ENCODE measurements at regions of chr15 and their contacts with region 1.

Region 1: DNA sequence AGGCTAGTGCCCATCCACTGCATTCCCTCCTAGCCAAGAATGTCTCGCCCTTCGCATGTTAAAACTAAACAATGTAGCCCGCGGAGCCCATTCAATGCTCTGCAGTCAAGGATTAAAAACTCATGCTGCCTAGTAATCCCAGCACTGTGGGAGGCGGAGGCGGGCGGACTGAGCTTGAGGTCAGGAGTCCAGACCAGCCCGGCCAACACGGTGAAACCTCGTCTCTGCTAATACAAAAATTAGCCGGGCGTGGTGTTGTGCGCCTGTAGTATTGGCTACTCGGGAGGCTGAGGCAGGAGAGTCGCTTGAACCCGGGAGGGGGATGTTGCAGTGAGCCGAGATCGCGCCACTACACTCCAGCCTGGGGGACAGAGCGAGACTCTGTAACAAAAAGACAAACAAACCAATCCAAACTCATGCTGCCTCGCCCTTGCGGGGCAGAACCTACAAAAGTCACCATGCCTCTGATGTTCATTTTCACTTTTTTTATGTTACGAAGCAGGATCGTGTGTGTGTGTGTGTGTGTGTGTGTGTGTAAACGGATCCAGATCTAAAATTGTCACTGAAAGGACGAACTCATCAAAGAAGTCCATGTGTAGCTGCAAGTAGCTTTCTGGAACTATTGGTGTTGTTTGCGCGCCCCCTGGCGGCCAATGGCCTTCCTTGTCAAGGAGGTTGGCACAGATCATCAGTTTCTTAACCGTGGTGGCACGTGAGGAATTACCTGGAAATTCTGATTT is 54.8 kb upstream of the SPESP1 start:
- DNase-seq: peak; percentile 76 to 97 (median 89)
- ATAC-seq: peak; percentile 81
- H3K4me3 ChIP-seq: no peak overlapping the region
- H3K4me3 Mint-ChIP-seq: peak overlapping the region; percentile 20
- H3K27ac ChIP-seq: no peak overlapping the region
- H3K27ac Mint-ChIP-seq: no peak overlapping the region
- H3K4me1 ChIP-seq: peaks cover 4% of the 10 kb centered on the region
- H3K4me1 Mint-ChIP-seq: peaks cover 4% of the 10 kb centered on the region
- H3K27me3 ChIP-seq: peaks cover 0 to 14% of the 10 kb centered on the region in 2 experiments
- H3K27me3 Mint-ChIP-seq: peaks cover 20% of the 10 kb centered on the region
- CTCF ChIP-seq: peak; percentile 80

Region 2: DNA sequence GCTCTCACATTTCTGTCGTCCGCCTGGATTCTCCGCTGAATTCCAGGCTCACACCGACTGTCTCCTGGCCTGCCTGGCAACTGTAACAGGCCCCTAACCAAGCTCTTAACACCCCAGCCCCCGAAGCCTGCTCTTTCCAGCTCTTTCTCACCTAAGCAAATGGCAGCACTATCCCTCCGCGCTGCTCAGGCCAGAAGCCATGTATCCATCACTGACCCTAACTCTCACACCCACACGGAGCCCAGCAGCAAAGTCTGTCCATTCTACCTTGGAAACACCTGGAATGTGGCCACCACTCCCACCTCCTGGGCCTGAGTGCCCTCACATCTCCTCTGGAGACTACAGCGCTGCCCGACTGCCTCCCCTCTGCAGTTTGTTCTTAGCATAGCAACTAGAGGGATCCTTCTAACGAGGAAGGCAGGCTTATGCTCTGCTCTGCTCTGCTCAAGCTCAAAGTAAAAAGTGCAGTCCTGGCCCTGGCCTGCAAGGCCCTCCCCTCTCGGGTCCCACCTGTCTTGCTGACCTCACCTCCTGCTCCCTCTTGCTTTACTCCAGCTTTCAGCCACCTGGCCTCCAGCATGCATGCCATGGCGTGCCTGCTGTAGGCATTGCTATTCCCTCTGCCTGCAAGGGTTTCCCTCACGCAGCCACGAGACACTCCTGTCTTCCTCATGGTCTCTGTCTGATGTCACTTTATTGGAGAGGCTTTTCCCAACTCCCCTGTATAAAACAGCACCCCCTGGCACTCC is 570.8 kb before region 1 on chr15:
- CTCF ChIA-PET with region 1: no interaction called
- POLR2A ChIA-PET with region 1: no interaction called
- intact Hi-C with region 1: loop called in 1 of 2 experiments (anchors 2 kb)
- DNase-seq: peak in 1 of 9 experiments; percentile 6
- ATAC-seq: no peak
- H3K4me3 ChIP-seq: no peak overlapping the region
- H3K4me3 Mint-ChIP-seq: no peak overlapping the region
- H3K27ac ChIP-seq: no peak overlapping the region
- H3K27ac Mint-ChIP-seq: no peak overlapping the region
- H3K4me1 ChIP-seq: peaks cover 14% of the 10 kb centered on the region
- H3K4me1 Mint-ChIP-seq: peaks cover 21% of the 10 kb centered on the region
- H3K27me3 ChIP-seq: peaks cover 0 to 5% of the 10 kb centered on the region in 2 experiments
- H3K27me3 Mint-ChIP-seq: peaks cover 4% of the 10 kb centered on the region
- CTCF ChIP-seq: no peak

Region 3: DNA sequence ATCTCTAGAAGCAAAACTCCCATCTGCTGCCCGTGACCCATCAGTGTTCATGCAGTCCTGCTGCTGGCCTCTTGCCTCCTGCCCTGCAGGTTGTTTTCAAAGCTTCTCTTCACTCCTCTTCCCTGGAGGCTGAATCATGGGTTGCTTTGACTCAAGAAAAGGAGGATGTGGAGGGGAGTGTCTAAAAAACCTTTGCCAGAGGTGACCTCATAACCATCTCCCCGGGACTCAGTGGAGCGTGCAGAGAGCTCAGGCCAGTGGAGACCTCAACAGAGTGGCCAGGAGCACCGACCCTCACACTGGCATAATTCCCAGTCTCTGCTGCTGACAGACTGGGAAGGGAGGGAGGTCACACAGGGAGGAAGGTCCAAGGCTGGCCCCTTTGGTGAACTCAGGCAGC is 382.7 kb before region 1 on chr15:
- CTCF ChIA-PET with region 1: no interaction called
- POLR2A ChIA-PET with region 1: no interaction called
- intact Hi-C with region 1: no loop called
- DNase-seq: no peak
- ATAC-seq: no peak
- H3K4me3 ChIP-seq: no peak overlapping the region
- H3K4me3 Mint-ChIP-seq: no peak overlapping the region
- H3K27ac ChIP-seq: no peak overlapping the region
- H3K27ac Mint-ChIP-seq: no peak overlapping the region
- H3K4me1 ChIP-seq: no peaks in the 10 kb centered on the region
- H3K4me1 Mint-ChIP-seq: no peaks in the 10 kb centered on the region
- H3K27me3 ChIP-seq: no peaks in the 10 kb centered on the region
- H3K27me3 Mint-ChIP-seq: peaks cover 21% of the 10 kb centered on the region
- CTCF ChIP-seq: no peak

Region 4: GRCh38 chr15:68559345-68560310 is 315.9 kb before region 1 on chr15:
- CTCF ChIA-PET with region 1: interaction called, 51 read pairs
- POLR2A ChIA-PET with region 1: no interaction called
- intact Hi-C with region 1: loop called (anchors 1 to 2 kb)
- DNase-seq: peak; percentile 50 to 84 (median 70)
- ATAC-seq: peak; percentile 95
- H3K4me3 ChIP-seq: peak overlapping the region; percentile 30 to 66
- H3K4me3 Mint-ChIP-seq: peak overlapping the region; percentile 75
- H3K27ac ChIP-seq: no peak overlapping the region
- H3K27ac Mint-ChIP-seq: no peak overlapping the region
- H3K4me1 ChIP-seq: peaks cover 8% of the 10 kb centered on the region
- H3K4me1 Mint-ChIP-seq: peaks cover 18% of the 10 kb centered on the region
- H3K27me3 ChIP-seq: peaks cover 0 to 15% of the 10 kb centered on the region in 2 experiments
- H3K27me3 Mint-ChIP-seq: peaks cover 49% of the 10 kb centered on the region
- CTCF ChIP-seq: peak; percentile 92

Region 5: DNA sequence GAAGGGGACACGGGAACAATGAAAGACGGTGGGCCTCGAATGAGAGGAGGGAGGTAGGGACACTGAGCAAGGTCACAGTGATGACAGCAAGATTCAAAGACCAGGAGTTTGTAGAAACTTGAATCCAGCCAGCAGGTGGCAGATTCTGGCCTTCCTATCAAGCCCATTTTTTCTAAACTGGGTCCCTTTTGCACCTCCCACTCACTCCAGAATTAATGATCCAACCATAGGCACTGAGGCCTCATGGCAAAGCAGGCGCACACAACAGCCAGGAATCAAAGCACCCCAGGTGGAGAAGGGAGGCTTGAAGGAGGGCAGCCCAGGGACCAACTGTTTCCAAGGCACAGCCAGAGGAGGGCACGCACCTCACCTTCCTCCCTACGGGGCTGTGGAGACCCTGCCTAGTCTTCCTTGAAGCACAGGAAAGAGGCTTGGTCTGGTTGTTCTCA is 145.1 kb before region 1 on chr15:
- CTCF ChIA-PET with region 1: interaction called, 51 read pairs
- POLR2A ChIA-PET with region 1: interaction called, 4 read pairs
- intact Hi-C with region 1: loop called (anchors 1 kb)
- DNase-seq: peak in 4 of 9 experiments; percentile 20 to 58 (median 47)
- ATAC-seq: no peak
- H3K4me3 ChIP-seq: no peak overlapping the region
- H3K4me3 Mint-ChIP-seq: no peak overlapping the region
- H3K27ac ChIP-seq: no peak overlapping the region
- H3K27ac Mint-ChIP-seq: no peak overlapping the region
- H3K4me1 ChIP-seq: no peaks in the 10 kb centered on the region
- H3K4me1 Mint-ChIP-seq: peaks cover 3% of the 10 kb centered on the region
- H3K27me3 ChIP-seq: no peaks in the 10 kb centered on the region
- H3K27me3 Mint-ChIP-seq: peaks cover 3% of the 10 kb centered on the region
- CTCF ChIP-seq: peak; percentile 40

Region 6: GRCh38 chr15:68820295-68821189 is 55.0 kb before region 1 on chr15 and contains the start of gene ANP32A:
- CTCF ChIA-PET with region 1: interaction called, 10 read pairs
- POLR2A ChIA-PET with region 1: no interaction called
- intact Hi-C with region 1: loop called in 1 of 2 experiments (anchors 10 kb)
- DNase-seq: peak; percentile 96 to 99 (median 97)
- ATAC-seq: peak; percentile 62
- H3K4me3 ChIP-seq: peak within 1 kb of the TSS; percentile 81 to 98
- H3K4me3 Mint-ChIP-seq: peak within 1 kb of the TSS; percentile 95
- H3K27ac ChIP-seq: peak within 1 kb of the TSS; percentile 59 to 74
- H3K27ac Mint-ChIP-seq: peak within 1 kb of the TSS; percentile 97
- H3K4me1 ChIP-seq: peaks cover 28% of the 10 kb centered on the region
- H3K4me1 Mint-ChIP-seq: peaks cover 31% of the 10 kb centered on the region
- H3K27me3 ChIP-seq: no peaks in the 10 kb centered on the region
- H3K27me3 Mint-ChIP-seq: no peaks in the 10 kb centered on the region
- CTCF ChIP-seq: no peak
- total RNA-seq, gene ANP32A: 47.6 to 51.9 TPM